H1 (cell line): ENCODE measurements at regions of chr5 and their contacts with region 1.

Region 1: GRCh38 chr5:157130925-157131324 is 11.7 kb downstream of the MED7 start:
- DNase-seq: no peak
- H3K4me3 ChIP-seq: no peak overlapping the region
- H3K27ac ChIP-seq: no peak overlapping the region
- H3K4me1 ChIP-seq: no peaks in the 10 kb centered on the region
- H3K27me3 ChIP-seq: no peaks in the 10 kb centered on the region
- CTCF ChIP-seq: no peak
- EP300 ChIP-seq: no peak
- POLR2A ChIP-seq: no peak
- RAD21 ChIP-seq: no peak

Region 2: DNA sequence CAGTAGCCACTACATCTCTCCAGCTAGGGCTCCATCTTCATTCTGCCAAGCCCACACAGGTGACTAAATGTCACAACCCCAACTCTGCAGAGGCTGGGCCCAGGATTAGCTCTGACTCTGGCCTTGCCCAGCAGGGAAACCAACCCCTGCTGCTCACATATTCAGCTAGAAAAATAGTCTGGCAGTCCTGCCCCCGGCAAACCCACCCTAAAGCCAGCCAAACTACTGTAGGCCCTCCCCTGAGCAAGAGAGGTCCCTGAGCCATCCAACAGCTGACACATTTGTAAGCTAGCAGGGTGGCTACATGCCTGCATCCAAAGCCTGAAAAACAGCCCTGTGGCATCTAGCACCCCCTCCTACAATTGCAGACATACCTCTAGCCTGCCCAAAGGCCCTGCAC is 10.8 kb before region 1 on chr5:
- CTCF ChIA-PET with region 1: interaction called, 14 read pairs
- POLR2A ChIA-PET with region 1: no interaction called
- DNase-seq: no peak
- H3K4me3 ChIP-seq: no peak overlapping the region
- H3K27ac ChIP-seq: no peak overlapping the region
- H3K4me1 ChIP-seq: no peaks in the 10 kb centered on the region; a peak in 1 of 7 replicates
- H3K27me3 ChIP-seq: no peaks in the 10 kb centered on the region
- CTCF ChIP-seq: no peak
- EP300 ChIP-seq: no peak
- POLR2A ChIP-seq: no peak
- RAD21 ChIP-seq: no peak

Region 3: DNA sequence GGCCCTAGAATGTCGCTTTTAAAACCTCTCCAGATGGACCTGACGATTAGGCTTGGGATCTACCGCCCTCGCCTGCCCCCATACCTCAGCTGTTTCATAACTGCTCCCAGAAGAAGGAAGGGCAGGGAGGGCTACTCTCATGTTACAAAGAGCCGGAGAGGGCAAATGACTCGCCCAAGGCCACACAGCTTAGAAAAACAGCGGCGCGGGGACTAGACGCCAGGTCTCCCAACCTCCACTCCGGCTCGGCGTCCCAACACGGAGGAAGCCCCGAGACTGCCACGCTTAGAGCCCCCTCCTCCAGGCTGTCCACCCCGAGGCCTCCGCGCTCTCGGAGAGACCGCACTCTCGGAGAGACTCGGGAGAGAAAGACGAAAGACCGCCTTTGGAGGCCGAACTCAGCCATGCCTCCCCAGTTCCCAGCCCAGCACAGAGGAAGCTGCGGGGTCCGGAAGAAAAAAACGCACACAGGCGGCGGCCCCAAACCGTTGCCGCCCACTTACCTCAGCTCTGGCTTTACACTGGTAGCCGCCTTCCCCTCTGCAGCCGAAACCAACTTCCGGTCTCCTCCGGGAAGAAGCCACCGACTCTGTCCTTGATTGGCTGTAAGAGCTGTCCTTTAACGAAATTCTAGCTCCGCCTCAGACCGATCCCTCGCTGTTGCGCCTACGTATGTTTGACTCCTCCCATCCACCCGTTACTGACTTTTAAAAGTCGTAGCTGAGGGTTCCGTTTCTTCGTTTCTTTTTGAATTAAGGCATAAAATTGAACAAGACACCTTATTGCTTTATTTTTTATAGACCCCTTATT is 11.6 kb after region 1 on chr5 and contains the start of gene MED7:
- CTCF ChIA-PET with region 1: interaction called, 15 read pairs
- POLR2A ChIA-PET with region 1: interaction called, 9 read pairs
- DNase-seq: peak; percentile 84 to 88
- H3K4me3 ChIP-seq: peak within 1 kb of the TSS; percentile 91 to 97 (median 92)
- H3K27ac ChIP-seq: peak within 1 kb of the TSS; percentile 82
- H3K4me1 ChIP-seq: no peaks in the 10 kb centered on the region
- H3K27me3 ChIP-seq: no peaks in the 10 kb centered on the region
- CTCF ChIP-seq: no peak
- EP300 ChIP-seq: no peak
- POLR2A ChIP-seq: peak; percentile 60 to 86
- RAD21 ChIP-seq: no peak
- total RNA-seq, gene MED7: 8.3 and 9.5 TPM in 2 replicates

Region 4: GRCh38 chr5:157366741-157367674 is 236.1 kb after region 1 on chr5:
- CTCF ChIA-PET with region 1: no interaction called
- POLR2A ChIA-PET with region 1: no interaction called
- DNase-seq: no peak
- H3K4me3 ChIP-seq: no peak overlapping the region
- H3K27ac ChIP-seq: no peak overlapping the region
- H3K4me1 ChIP-seq: peaks cover 0 to 5% (median 3%) of the 10 kb centered on the region in 4 experiments; a peak in 4 of 7 replicates
- H3K27me3 ChIP-seq: no peaks in the 10 kb centered on the region; a peak in 1 of 7 replicates
- CTCF ChIP-seq: peak; percentile 41 to 73 (median 61)
- EP300 ChIP-seq: no peak
- POLR2A ChIP-seq: no peak
- RAD21 ChIP-seq: peak; percentile 84 to 89